Testis (tissue), 5 donors: ENCODE measurements at regions of chr1 and their contacts with region 1.

Region 1: GRCh38 chr1:20100632-20101355 is 18.5 kb downstream of the PLA2G2D start:
- DNase-seq: peak; percentile 56
- H3K4me3 ChIP-seq: no peak overlapping the region
- H3K27ac ChIP-seq: no peak overlapping the region
- H3K4me1 ChIP-seq: no peaks in the 10 kb centered on the region
- H3K27me3 ChIP-seq: no peaks in the 10 kb centered on the region
- CTCF ChIP-seq: peak; percentile 67 to 86 (median 79)
- POLR2A ChIP-seq: no peak

Region 2: DNA sequence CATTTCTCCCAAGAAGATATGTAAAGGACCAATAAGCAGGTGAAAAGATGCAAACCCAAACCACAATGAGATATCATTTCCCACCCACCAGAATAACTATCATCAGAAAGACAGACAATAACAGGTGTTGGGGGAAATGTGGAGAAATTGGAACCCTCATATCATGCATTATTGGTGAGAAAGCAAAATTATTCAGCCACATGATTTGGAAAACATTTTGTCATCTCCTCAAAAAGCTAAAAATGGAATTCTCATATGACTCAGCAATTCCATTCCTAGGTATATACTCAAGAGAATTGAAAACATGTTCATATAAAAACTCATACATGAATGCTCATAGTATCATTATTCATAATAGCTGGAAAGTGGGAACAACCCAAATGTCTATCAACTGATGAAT is 260.6 kb before region 1 on chr1:
- intact Hi-C with region 1: no loop called
- DNase-seq: no peak
- H3K4me3 ChIP-seq: no peak overlapping the region
- H3K27ac ChIP-seq: no peak overlapping the region
- H3K4me1 ChIP-seq: peaks cover 7% of the 10 kb centered on the region
- H3K27me3 ChIP-seq: no peaks in the 10 kb centered on the region
- CTCF ChIP-seq: no peak
- POLR2A ChIP-seq: no peak

Region 3: GRCh38 chr1:19967808-19968207 is 133.0 kb before region 1 on chr1:
- intact Hi-C with region 1: no loop called
- DNase-seq: peak; percentile 49
- H3K4me3 ChIP-seq: no peak overlapping the region
- H3K27ac ChIP-seq: peak overlapping the region in 1 of 2 donors; percentile 37
- H3K4me1 ChIP-seq: no peaks in the 10 kb centered on the region
- H3K27me3 ChIP-seq: no peaks in the 10 kb centered on the region
- CTCF ChIP-seq: no peak
- POLR2A ChIP-seq: no peak

Region 4: DNA sequence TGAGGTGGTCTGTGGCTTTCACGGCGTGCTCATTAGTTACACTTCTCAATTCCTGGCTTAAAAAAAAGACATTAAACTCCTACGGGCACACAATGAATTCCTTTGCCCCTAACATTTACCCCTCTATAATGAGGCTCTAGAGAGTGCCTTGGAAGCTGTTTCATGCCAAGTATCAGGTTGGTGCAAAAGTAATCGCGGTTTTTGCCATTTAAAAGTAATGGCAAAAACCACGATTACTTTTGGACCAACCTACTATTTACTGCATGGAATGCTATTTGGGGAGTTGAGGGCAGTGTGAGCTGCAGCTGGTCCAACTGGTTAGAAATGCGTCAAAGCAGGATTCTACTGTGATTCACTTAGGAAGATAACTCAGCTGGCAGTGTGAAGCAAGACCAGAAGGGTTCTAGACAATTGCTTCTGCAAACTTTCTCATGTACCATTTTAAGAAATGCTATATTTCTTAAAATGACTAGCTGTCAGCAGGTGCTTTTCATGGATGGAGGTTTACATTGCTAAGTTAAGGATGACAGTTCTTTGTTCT is 106.7 kb after region 1 on chr1:
- intact Hi-C with region 1: loop called (anchors 10 kb)
- DNase-seq: no peak
- H3K4me3 ChIP-seq: no peak overlapping the region
- H3K27ac ChIP-seq: no peak overlapping the region
- H3K4me1 ChIP-seq: peaks cover 21% of the 10 kb centered on the region
- H3K27me3 ChIP-seq: no peaks in the 10 kb centered on the region
- CTCF ChIP-seq: no peak
- POLR2A ChIP-seq: no peak